ENCODE measurements at regions of chr5 and their contacts with region 1.

Region 1: DNA sequence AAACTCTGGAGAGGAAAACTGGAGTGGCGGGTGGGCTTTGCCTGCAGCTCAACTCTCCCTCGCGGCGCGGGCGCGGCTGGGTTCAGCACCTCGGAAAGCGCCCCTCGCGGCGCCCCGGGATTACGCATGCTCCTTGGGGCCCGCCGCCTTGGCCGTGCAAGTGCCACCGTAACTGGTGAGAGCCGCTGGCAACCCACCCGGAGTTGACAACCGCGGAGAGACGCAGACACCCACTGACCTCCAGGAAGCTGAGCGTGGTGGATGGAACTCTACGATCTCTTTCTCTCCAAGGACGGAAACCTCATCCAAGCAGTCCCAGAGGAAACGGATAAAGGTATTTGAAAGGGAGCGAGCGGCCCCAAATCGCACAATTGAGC is 194 bp upstream of the RXFP3 start:
- DNase-seq: peak in 1 of 2 donors; percentile 89
- H3K4me3 ChIP-seq: no peak overlapping the region
- CTCF ChIP-seq: no peak
- POLR2A ChIP-seq: no peak

Region 2: DNA sequence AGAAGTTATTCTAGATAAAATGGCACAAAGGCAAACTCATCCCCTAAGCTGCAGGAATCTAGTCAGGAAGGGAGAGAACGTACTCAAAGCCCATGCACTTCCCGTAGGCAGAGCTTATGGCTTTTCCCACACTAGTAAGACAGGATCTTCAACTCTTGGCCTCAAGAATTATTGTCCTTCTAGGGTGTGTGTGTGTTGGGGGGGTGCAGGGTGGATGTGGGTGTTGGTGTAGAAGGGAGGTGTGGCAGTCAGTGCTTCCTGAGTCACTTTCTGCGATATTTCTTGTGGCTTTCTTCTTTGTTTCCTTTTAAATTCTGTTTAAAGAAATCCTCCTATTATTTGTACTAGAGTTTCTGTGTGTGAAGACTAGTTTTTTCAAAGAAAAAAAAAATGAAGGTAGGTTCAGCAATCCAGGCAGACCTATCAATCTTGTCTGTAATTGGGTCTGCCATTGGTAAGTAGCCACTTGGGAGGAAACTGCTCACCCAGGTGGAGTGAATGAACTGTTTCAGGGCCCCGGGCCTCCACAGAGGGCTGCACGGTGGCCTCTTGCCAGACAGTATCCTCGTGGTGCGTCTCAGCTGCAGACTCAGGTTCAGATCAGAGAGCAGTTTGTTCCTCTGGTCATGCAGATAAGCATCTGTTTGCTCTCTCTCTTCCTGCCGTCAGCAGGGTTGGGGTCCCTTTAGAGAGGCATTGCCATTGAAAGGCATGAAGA is 1093.0 kb before region 1 on chr5:
- intact Hi-C with region 1: no loop called
- DNase-seq: peak in 1 of 2 donors; percentile 21
- H3K4me3 ChIP-seq: no peak overlapping the region
- CTCF ChIP-seq: no peak
- POLR2A ChIP-seq: no peak

Region 3: DNA sequence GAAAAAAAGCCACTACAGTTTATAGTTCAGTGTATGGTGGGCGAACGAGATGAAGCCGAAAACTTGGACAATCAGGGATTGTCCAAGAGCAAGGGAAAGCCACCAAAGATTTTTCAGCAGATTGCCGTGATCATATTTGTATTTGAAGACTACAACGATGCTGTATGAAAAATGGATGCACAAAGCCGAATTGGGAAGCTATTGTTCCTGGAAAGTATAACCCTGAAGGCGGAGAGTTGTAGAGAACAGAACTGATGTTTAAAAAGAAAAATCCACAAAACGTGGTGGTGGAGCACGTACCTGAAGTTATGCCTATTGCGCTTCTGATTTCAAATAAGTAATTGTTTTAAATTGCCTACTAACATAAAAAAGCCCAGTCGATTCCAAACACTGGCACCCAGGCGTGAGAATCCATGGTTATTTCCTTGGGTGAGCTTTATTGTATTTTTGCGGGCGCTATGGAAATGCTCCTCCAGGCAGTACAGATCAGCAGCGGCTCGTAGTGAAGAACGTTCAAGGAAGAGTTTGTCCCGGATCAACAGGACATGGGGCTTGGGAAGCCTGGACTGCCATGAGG is 496.0 kb before region 1 on chr5:
- intact Hi-C with region 1: loop called (anchors 10 kb)
- DNase-seq: no peak
- H3K4me3 ChIP-seq: peak overlapping the region; percentile 41
- CTCF ChIP-seq: no peak
- POLR2A ChIP-seq: no peak

Region 4: DNA sequence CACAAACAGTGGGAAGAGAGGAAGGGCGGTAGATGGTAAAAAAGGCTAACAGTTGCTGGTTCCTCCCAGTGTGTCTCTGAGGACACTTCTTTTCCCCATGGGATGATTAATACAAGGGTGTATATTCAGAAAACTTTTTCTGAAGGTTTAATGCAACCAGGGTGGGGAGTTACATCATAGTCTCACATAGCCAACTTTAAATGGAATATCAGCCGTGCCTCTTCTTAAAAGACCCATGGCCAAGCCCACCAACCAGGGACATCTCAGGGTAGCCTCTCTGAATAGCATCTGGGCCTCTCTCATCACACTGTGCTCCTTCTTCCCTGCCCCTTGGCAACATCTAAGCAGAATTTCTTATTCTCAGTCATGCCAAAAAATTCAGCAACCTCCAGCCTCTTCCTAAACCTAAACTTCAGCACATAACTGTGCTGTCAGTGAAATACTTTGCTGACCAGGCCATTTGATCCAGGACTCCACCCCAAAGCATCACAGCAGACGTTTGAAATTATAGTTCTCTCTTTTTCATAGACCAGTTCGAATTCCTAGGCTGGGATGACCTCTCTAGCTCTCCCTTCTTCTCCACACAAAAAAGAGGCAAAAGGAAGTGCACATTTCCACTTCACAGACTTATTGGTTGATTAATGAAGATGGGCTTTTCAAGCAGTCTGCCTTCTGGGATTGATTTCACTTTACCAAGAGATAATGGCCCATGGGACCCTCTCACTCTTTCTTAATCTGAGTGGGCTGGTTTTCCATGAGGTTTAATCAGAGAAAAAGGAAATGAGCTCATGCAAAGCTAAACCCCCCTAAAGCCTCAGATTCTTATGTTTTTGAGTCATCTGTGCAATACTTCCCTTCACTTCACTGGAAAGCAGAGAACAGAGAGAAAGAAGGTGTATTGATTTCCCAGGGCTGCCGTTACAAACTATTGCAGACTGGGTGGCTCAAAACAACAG is 635.0 kb after region 1 on chr5:
- intact Hi-C with region 1: no loop called
- DNase-seq: no peak
- H3K4me3 ChIP-seq: no peak overlapping the region
- CTCF ChIP-seq: no peak
- POLR2A ChIP-seq: no peak

Measured in lower leg skin (tissue), 4 donors.